PC-3 (cell line): ENCODE measurements at regions of chr12 and their contacts with region 1.

Region 1: DNA sequence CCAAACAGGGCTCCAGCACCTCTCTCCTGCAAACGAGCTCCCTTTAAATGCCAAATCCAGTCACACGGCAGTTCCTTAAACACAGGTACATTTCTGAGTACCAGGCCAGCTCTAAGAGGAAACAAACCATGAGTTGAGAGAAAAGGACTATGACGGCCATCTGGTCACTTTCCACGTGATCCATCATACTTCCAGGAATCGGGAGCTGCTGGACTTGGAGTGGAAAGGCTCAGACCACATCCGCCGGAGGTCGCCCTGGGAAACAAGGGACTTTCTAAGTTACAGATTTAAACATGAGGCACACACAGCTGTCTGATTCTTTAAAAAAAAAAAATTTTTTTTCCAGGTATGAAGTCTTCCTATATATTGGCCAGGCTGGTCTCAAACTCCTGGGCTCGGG is 39.2 kb downstream of the ACADS start:
- DNase-seq: no peak
- ATAC-seq: no peak
- H3K4me3 ChIP-seq: no peak overlapping the region
- H3K27ac ChIP-seq: no peak overlapping the region
- H3K4me1 ChIP-seq: no peaks in the 10 kb centered on the region
- H3K27me3 ChIP-seq: no peaks in the 10 kb centered on the region
- CTCF ChIP-seq: no peak

Region 2: DNA sequence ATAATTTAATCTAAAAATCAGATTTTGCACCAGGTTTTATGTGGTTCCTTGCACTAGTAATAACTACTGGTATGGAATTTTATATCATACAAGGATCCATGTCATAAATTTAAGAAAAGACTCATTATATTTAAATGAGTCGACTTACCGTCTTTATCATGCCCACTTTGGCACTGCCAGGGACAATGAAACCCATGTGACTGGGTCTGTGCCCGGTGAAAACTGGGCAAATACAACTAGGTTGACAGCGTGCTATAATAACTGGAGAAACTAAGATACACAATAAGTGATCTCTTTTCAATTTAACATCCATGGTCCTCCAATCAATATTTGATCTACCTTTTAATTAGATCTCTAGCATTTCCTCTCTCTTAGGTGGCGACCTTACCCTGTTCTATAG is 25.3 kb after region 1 on chr12:
- CTCF ChIA-PET with region 1: interaction called, 12 read pairs
- POLR2A ChIA-PET with region 1: no interaction called
- intact Hi-C with region 1: no loop called
- DNase-seq: no peak
- ATAC-seq: no peak
- H3K4me3 ChIP-seq: no peak overlapping the region
- H3K27ac ChIP-seq: no peak overlapping the region
- H3K4me1 ChIP-seq: no peaks in the 10 kb centered on the region
- H3K27me3 ChIP-seq: no peaks in the 10 kb centered on the region
- CTCF ChIP-seq: no peak